CD8-positive, alpha-beta T cell (primary cell): ENCODE measurements at regions of chr4 and their contacts with region 1.

Region 1: DNA sequence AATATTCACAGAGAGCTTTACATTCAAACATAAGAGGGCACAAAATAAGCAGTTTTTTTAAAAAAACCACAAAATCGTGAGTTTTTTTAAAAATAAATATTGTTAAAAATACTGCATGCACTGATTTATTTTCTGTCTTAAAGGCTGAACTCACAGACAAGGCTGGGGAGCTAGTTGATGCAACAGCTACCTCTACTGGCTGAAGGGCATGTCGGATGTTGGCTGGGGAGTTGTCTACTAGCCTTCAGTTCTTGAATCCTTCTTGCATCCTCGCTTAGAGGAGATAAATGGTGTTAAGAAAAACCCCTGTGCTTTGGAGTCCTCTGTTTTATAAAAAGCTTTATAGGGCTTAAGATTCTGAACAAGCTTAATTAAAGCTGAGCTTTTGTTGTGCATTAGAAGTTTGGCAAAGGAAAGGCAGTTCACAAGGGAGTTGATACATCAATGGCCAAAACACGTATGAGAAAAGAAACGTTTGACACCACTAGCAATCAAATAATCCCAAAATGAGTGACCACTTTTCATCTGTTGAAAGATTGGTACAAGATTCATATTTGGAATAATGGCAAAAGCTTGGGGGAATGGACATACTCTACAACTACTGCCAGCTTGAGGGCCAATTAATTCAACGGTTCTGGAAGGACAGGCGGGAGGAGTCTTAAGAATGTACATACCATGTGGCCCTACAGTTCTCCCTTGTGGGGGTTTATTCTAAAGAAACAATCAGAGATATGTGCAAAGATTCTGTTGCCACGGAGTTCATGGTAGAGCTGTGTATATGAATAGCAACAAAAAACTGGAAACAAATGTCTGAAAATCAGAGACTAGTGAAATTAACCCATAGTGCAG is 94.7 kb downstream of the SEL1L3 start:
- DNase-seq: peak in 2 of 9 experiments; percentile 40 to 58
- ATAC-seq: no peak
- H3K4me3 ChIP-seq: no peak overlapping the region
- H3K4me3 Mint-ChIP-seq: no peak overlapping the region
- H3K27ac ChIP-seq: no peak overlapping the region
- H3K27ac Mint-ChIP-seq: no peak overlapping the region
- H3K4me1 ChIP-seq: no peaks in the 10 kb centered on the region
- H3K4me1 Mint-ChIP-seq: no peaks in the 10 kb centered on the region
- H3K27me3 ChIP-seq: no peaks in the 10 kb centered on the region
- H3K27me3 Mint-ChIP-seq: no peaks in the 10 kb centered on the region
- CTCF ChIP-seq: no peak

Region 2: GRCh38 chr4:25439918-25440477 is 328.1 kb before region 1 on chr4:
- CTCF ChIA-PET with region 1: interaction called, 6 read pairs
- POLR2A ChIA-PET with region 1: no interaction called
- intact Hi-C with region 1: loop called (anchors 2 to 5 kb)
- DNase-seq: peak in 7 of 9 experiments; percentile 21 to 66 (median 43)
- ATAC-seq: peak; percentile 49
- H3K4me3 ChIP-seq: no peak overlapping the region
- H3K4me3 Mint-ChIP-seq: no peak overlapping the region
- H3K27ac ChIP-seq: no peak overlapping the region
- H3K27ac Mint-ChIP-seq: no peak overlapping the region
- H3K4me1 ChIP-seq: no peaks in the 10 kb centered on the region
- H3K4me1 Mint-ChIP-seq: no peaks in the 10 kb centered on the region
- H3K27me3 ChIP-seq: no peaks in the 10 kb centered on the region
- H3K27me3 Mint-ChIP-seq: no peaks in the 10 kb centered on the region
- CTCF ChIP-seq: peak; percentile 70